Posterior vena cava (tissue), 2 donors: ENCODE measurements at regions of chr21 and their contacts with region 1.

Region 1: GRCh38 chr21:32030146-32030652 is 157.4 kb downstream of the HUNK start:
- DNase-seq: no peak

Region 2: GRCh38 chr21:32055305-32055704 is 25.1 kb after region 1 on chr21:
- intact Hi-C with region 1: loop called in 1 of 2 experiments (anchors 1 kb)
- DNase-seq: no peak

Region 3: GRCh38 chr21:32083197-32083596 is 53.0 kb after region 1 on chr21:
- intact Hi-C with region 1: loop called in 1 of 2 experiments (anchors 5 kb)
- DNase-seq: no peak

Region 4: DNA sequence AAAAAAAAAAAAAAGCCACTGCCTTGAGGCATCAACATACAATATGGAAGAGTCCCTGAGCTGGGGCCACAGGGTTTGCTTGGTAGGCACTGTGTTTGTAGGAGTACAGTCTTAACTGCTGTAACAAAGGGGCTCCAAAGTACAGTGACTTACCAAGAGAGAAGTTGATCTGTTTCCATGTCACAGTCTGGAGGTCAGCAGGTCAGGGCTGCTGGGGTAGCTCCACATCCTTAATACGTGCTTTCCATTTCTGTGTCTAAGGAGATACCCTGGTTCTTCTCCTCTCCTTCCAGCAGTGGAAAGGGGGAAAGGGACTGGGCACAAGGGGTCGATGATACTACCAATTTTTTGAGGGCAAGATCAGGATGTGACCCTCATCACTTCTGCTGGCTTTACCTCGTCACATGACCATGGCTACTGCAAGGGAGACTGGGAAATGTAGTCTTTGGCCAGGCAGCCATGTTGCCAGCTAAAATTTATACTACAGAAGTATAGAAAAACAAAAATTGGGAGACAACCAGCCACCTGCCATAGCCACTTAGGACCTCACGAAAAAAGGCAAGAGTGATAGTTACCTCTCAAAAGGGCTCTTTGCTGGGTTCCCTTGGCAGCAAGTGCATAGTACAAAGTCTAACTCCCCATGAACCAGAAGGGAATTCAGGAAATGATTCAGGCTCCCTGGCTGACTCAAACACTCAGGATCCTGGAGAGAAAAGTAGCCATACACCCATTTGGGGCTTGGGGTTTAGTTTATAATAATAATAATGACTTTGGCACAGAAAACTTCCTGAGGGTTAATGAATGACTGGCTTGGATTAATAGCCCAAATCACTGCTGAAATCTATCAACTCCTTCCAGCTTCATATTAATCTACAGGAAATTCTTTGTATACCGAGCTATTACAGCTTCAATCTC is 1938.1 kb after region 1 on chr21:
- intact Hi-C with region 1: no loop called
- DNase-seq: no peak